ENCODE measurements at regions of chr1 and their contacts with region 1.

Region 1: GRCh38 chr1:53959664-53960250 is 13.6 kb downstream of the LRRC42 start:
- DNase-seq: no peak
- H3K4me3 ChIP-seq: no peak overlapping the region
- CTCF ChIP-seq: no peak
- POLR2A ChIP-seq: no peak

Region 2: DNA sequence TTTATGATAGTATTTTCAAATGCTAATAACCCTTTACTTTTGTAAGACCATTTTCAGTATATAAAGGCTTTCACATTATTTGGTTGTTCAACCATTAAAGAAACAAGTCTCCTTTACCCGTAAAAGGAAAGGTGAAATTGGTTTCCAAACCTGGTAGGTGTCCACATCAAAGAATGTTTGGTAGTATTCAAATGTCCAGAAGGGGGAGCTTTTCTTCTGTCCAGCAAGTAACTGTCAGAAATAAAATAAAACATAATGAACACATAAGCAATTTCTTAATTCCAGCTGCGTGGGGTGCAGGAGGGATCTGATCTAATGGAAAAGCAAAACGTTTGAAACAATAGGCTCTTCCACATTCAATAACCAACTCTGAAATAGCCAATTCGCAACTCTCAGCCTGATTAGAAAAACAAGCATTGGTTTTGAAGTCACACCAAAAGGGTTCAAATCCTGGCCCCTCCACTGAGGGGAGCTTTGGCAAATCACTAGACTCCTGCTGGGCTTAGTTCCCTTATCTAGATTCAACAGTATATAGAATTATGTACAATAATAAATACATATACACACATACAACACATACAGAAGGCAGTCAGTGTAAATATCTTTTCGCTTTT is 81.2 kb before region 1 on chr1:
- intact Hi-C with region 1: loop called (anchors 5 kb)
- DNase-seq: no peak
- H3K4me3 ChIP-seq: no peak overlapping the region
- CTCF ChIP-seq: no peak
- POLR2A ChIP-seq: no peak

Measured in lower leg skin (tissue), 4 donors.